Ascending aorta (tissue), 2 donors: ENCODE measurements at regions of chrX and their contacts with region 1.

Region 1: GRCh38 chrX:71532753-71533425 is at the start of gene OGT:
- DNase-seq: peak; percentile 77 to 97
- H3K4me3 ChIP-seq: peak within 1 kb of the TSS; percentile 52 to 72
- H3K27ac ChIP-seq: peak within 1 kb of the TSS; percentile 86 to 90
- H3K4me1 ChIP-seq: no peaks in the 10 kb centered on the region
- H3K27me3 ChIP-seq: no peaks in the 10 kb centered on the region
- CTCF ChIP-seq: no peak
- total RNA-seq, gene OGT: 64.2 TPM

Region 2: DNA sequence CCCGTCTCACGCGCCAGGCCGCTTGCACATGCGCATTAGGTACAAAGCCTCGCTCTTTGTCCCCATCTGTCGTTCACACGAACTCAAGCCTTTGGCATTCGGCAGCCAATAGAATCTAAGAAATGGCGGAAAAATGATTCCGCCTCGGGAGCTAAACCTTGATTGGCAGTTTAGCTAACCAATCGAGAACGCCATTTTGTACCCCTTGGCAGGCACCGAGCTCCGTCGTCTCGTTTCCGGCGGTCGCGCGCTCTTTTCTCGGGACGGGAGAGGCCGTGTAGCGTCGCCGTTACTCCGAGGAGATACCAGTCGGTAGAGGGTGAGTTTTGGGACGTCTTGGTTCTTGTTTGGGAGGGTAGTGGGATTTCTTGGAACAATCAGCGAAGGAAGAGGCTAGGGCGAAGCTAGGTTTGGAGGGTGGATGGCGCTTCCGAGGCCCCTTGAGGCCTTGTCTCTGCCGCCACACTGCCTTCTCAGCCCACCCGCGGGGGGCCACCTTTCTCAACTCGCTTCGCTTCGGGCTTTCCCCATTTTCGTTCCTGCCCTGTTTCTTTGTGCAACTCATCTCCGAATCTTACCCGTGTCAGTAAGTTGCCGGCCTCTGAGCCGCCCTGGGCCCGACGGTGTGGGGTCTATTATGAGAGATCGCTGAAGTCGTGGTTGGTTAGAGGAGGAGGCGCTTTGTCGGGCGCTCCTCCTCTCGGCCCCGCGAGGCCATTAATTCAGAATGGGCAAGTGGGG is 249.3 kb before region 1 on chrX and contains the start of gene NONO:
- intact Hi-C with region 1: loop called (anchors 5 kb)
- DNase-seq: peak; percentile 36 to 91
- H3K4me3 ChIP-seq: peak within 1 kb of the TSS; percentile 63 to 64
- H3K27ac ChIP-seq: peak within 1 kb of the TSS; percentile 86 to 89
- H3K4me1 ChIP-seq: no peaks in the 10 kb centered on the region
- H3K27me3 ChIP-seq: no peaks in the 10 kb centered on the region
- CTCF ChIP-seq: peak in 2 of 3 experiments; percentile 11 to 19
- total RNA-seq, gene NONO: 178 TPM

Region 3: GRCh38 chrX:71365876-71366673 is 166.8 kb before region 1 on chrX and contains the start of gene TAF1:
- intact Hi-C with region 1: loop called (anchors 10 kb)
- DNase-seq: peak; percentile 87 to 97
- H3K4me3 ChIP-seq: peak within 1 kb of the TSS; percentile 58 to 82
- H3K27ac ChIP-seq: peak within 1 kb of the TSS; percentile 87 to 95
- H3K4me1 ChIP-seq: peaks cover 0 to 5% of the 10 kb centered on the region in 2 donors
- H3K27me3 ChIP-seq: no peaks in the 10 kb centered on the region
- CTCF ChIP-seq: no peak
- total RNA-seq, gene TAF1: 63.2 TPM

Region 4: GRCh38 chrX:71492231-71493065 is 40.4 kb before region 1 on chrX:
- intact Hi-C with region 1: loop called (anchors 5 kb)
- DNase-seq: peak in 1 of 2 donors; percentile 72
- H3K4me3 ChIP-seq: peak overlapping the region; percentile 55 to 67
- H3K27ac ChIP-seq: peak overlapping the region; percentile 24 to 38
- H3K4me1 ChIP-seq: no peaks in the 10 kb centered on the region
- H3K27me3 ChIP-seq: no peaks in the 10 kb centered on the region
- CTCF ChIP-seq: no peak

Region 5: DNA sequence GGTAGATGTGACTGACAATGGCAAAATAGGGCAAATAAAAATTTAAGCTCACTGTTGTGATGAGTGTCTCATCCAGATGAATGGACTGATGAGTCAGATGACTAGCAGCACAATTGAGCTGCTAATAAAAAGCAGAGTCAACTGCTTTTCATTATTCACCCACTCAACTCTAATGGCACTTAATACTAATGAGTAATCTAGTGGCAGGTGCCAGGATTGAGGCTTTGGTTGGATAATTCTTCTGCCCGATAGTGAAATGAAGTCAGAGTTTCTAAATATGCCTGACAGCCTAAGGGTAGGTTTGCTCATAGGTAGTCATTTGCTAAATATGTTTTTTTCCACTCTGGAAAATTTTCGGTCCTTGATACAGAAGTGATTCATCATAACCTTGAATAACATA is 10.4 kb after region 1 on chrX:
- intact Hi-C with region 1: loop called (anchors 1 kb)
- DNase-seq: no peak
- H3K4me3 ChIP-seq: no peak overlapping the region
- H3K27ac ChIP-seq: peak overlapping the region; percentile 60 to 74
- H3K4me1 ChIP-seq: peaks cover 0 to 18% of the 10 kb centered on the region in 2 donors
- H3K27me3 ChIP-seq: no peaks in the 10 kb centered on the region
- CTCF ChIP-seq: no peak